Activated T-helper 1 cell treated with anti-CD3 and anti-CD28 coated beads, Interleukin-12 subunit alpha, Interleukin-12 subunit beta, Interleukin-2, Interleukin-4 antibody, amounts not matched to agents 30 ng/mL and 10 ng/mL and 1 ng/mL, durations not matched to agents 14 hours and 24 hours and 36 hours (primary cell): ENCODE measurements at regions of chrX and their contacts with region 1.

Region 1: GRCh38 chrX:78333521-78333920 is 6.1 kb upstream of the CYSLTR1 start:
- DNase-seq: peak; percentile 33
- H3K4me3 Mint-ChIP-seq: peak overlapping the region; percentile 53
- H3K27ac Mint-ChIP-seq: peak overlapping the region; percentile 93
- H3K4me1 Mint-ChIP-seq: peaks cover 73% of the 10 kb centered on the region
- H3K27me3 Mint-ChIP-seq: no peaks in the 10 kb centered on the region

Region 2: GRCh38 chrX:77910108-77910840 is 423.2 kb before region 1 on chrX and contains the start of gene ATP7A:
- intact Hi-C with region 1: loop called (anchors 1 kb)
- DNase-seq: peak; percentile 85
- H3K4me3 Mint-ChIP-seq: peak within 1 kb of the TSS; percentile 98
- H3K27ac Mint-ChIP-seq: peak within 1 kb of the TSS; percentile 97
- H3K4me1 Mint-ChIP-seq: peaks cover 16% of the 10 kb centered on the region
- H3K27me3 Mint-ChIP-seq: no peaks in the 10 kb centered on the region
- total RNA-seq, gene ATP7A: 6.1 and 6.9 TPM in 2 replicates

Region 3: DNA sequence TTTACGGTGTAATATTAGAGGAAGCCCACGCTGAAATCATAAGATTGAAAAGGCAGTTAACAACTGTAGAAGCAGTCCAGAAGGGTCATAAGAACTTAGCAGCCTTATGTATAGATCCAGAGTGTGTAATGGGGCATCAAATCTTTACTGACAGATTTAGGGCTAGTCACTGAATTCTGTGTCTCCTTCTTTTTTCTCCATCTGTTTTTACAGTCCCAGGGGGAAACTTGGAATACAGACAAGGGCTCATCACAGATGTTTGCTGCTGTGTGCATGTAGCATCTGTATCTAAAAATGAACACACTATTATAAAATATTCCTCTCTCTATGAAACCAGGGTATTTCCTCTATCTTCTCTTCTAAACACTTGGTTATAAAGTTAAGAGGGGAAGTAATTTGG is 50.0 kb before region 1 on chrX:
- intact Hi-C with region 1: no loop called
- DNase-seq: no peak
- H3K4me3 Mint-ChIP-seq: no peak overlapping the region
- H3K27ac Mint-ChIP-seq: no peak overlapping the region
- H3K4me1 Mint-ChIP-seq: no peaks in the 10 kb centered on the region
- H3K27me3 Mint-ChIP-seq: no peaks in the 10 kb centered on the region

Region 4: GRCh38 chrX:78314571-78314970 is 18.9 kb before region 1 on chrX:
- intact Hi-C with region 1: loop called (anchors 2 kb)
- DNase-seq: no peak
- H3K4me3 Mint-ChIP-seq: peak overlapping the region; percentile 19
- H3K27ac Mint-ChIP-seq: peak overlapping the region; percentile 92
- H3K4me1 Mint-ChIP-seq: peaks cover 74% of the 10 kb centered on the region
- H3K27me3 Mint-ChIP-seq: no peaks in the 10 kb centered on the region

Region 5: GRCh38 chrX:78375894-78376293 is 42.4 kb after region 1 on chrX:
- intact Hi-C with region 1: loop called (anchors 1 kb)
- DNase-seq: no peak
- H3K4me3 Mint-ChIP-seq: no peak overlapping the region
- H3K27ac Mint-ChIP-seq: peak overlapping the region; percentile 27
- H3K4me1 Mint-ChIP-seq: peaks cover 46% of the 10 kb centered on the region
- H3K27me3 Mint-ChIP-seq: no peaks in the 10 kb centered on the region

Region 6: DNA sequence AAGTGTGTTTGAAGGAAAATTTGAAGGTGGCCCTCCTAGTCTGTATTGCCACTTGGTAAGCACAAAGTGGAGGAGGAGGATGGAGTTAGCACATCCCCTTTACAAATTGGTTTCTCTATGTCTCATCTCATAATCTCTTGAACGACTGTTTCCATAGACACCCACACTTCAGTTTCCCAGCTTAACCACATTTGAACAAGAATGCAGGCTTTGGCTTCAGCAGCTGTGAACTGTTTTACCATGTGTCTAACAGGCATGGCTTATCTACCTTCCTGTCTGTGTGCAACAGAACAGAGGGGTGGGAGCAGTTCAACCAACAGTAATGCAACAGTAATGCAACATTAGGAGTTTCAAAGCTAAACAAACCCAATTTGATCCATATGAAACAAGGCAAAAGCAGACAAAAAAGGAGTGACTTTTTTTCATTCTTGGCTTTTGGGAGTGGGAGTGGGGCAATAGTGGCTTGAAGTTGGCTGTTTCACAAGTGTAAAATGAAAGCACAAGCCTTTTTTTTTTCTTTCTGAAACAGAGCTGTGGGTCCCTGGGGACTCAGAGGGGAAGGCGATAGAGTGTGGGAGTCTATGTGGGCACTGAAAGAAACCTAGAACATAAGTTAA is 925.7 kb after region 1 on chrX:
- intact Hi-C with region 1: loop called (anchors 2 kb)
- DNase-seq: peak; percentile 57
- H3K4me3 Mint-ChIP-seq: peak overlapping the region; percentile 45
- H3K27ac Mint-ChIP-seq: peak overlapping the region; percentile 87
- H3K4me1 Mint-ChIP-seq: peaks cover 86% of the 10 kb centered on the region
- H3K27me3 Mint-ChIP-seq: no peaks in the 10 kb centered on the region